Activated naive CD4-positive, alpha-beta T cell treated with anti-CD3 and anti-CD28 coated beads for 36 hours (primary cell): ENCODE measurements at regions of chr9 and their contacts with region 1.

Region 1: GRCh38 chr9:112379177-112380101 is 469 bp upstream of the HSDL2 start:
- DNase-seq: peak; percentile 99
- H3K4me3 Mint-ChIP-seq: peak overlapping the region; percentile 100
- H3K27ac Mint-ChIP-seq: peak overlapping the region; percentile 99
- H3K4me1 Mint-ChIP-seq: peaks cover 39% of the 10 kb centered on the region
- H3K27me3 Mint-ChIP-seq: no peaks in the 10 kb centered on the region

Region 2: GRCh38 chr9:111661150-111661801 is 718.2 kb before region 1 on chr9 and contains the start of gene GNG10:
- CTCF ChIA-PET with region 1: no interaction called
- intact Hi-C with region 1: loop called (anchors 5 kb)
- DNase-seq: peak; percentile 63
- H3K4me3 Mint-ChIP-seq: peak within 1 kb of the TSS; percentile 97
- H3K27ac Mint-ChIP-seq: peak within 1 kb of the TSS; percentile 95
- H3K4me1 Mint-ChIP-seq: peaks cover 31% of the 10 kb centered on the region
- H3K27me3 Mint-ChIP-seq: peaks cover 2% of the 10 kb centered on the region
- total RNA-seq, gene GNG10: 20.6 to 21.1 TPM

Region 3: GRCh38 chr9:111992523-111992922 is 386.9 kb before region 1 on chr9:
- CTCF ChIA-PET with region 1: no interaction called
- intact Hi-C with region 1: loop called (anchors 2 kb)
- DNase-seq: peak; percentile 61
- H3K4me3 Mint-ChIP-seq: no peak overlapping the region
- H3K27ac Mint-ChIP-seq: no peak overlapping the region
- H3K4me1 Mint-ChIP-seq: peaks cover 31% of the 10 kb centered on the region
- H3K27me3 Mint-ChIP-seq: no peaks in the 10 kb centered on the region

Region 4: GRCh38 chr9:112355427-112355897 is 24.0 kb before region 1 on chr9:
- CTCF ChIA-PET with region 1: interaction called, 10 read pairs
- intact Hi-C with region 1: loop called (anchors 1 kb)
- DNase-seq: peak; percentile 18
- H3K4me3 Mint-ChIP-seq: no peak overlapping the region
- H3K27ac Mint-ChIP-seq: peak overlapping the region; percentile 34
- H3K4me1 Mint-ChIP-seq: peaks cover 31% of the 10 kb centered on the region
- H3K27me3 Mint-ChIP-seq: no peaks in the 10 kb centered on the region

Region 5: DNA sequence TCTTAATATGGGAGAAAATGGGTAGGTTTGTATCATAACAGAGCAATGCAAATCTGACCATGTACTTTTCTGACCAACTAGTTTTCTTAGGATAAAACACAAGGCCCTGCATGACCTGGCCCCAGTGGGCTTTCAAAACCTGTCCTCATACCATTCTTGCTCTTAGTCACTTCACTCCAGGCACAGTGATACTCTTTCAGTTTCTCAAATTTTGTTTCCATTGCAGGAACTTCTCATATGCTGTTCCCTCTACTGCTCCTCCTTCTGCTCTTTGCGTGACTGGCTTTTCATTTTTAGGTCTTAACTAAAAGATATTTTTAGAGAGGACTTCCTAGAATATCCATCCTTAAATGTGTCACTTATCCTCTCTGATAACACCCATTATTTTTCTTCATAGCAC is 226.1 kb after region 1 on chr9:
- CTCF ChIA-PET with region 1: no interaction called
- intact Hi-C with region 1: loop called (anchors 5 kb)
- DNase-seq: peak; percentile 15
- H3K4me3 Mint-ChIP-seq: peak overlapping the region; percentile 1
- H3K27ac Mint-ChIP-seq: peak overlapping the region; percentile 9
- H3K4me1 Mint-ChIP-seq: peaks cover 17% of the 10 kb centered on the region
- H3K27me3 Mint-ChIP-seq: no peaks in the 10 kb centered on the region

Region 6: GRCh38 chr9:112793213-112793810 is 413.9 kb after region 1 on chr9:
- CTCF ChIA-PET with region 1: interaction called, 7 read pairs
- intact Hi-C with region 1: loop called (anchors 1 kb)
- DNase-seq: peak; percentile 93
- H3K4me3 Mint-ChIP-seq: no peak overlapping the region
- H3K27ac Mint-ChIP-seq: no peak overlapping the region
- H3K4me1 Mint-ChIP-seq: peaks cover 7% of the 10 kb centered on the region
- H3K27me3 Mint-ChIP-seq: no peaks in the 10 kb centered on the region